Breast epithelium (tissue), 4 donors: ENCODE measurements at regions of chr1 and their contacts with region 1.

Region 1: GRCh38 chr1:30407865-30408580 is 315.4 kb downstream of the MATN1 start:
- DNase-seq: peak in 1 of 2 donors; percentile 33
- H3K4me3 ChIP-seq: no peak overlapping the region
- H3K27ac ChIP-seq: no peak overlapping the region
- H3K4me1 ChIP-seq: no peaks in the 10 kb centered on the region
- H3K27me3 ChIP-seq: no peaks in the 10 kb centered on the region
- CTCF ChIP-seq: no peak
- POLR2A ChIP-seq: no peak

Region 2: GRCh38 chr1:29395736-29396437 is 1012.1 kb before region 1 on chr1:
- intact Hi-C with region 1: loop called (anchors 2 kb)
- DNase-seq: no peak
- H3K4me3 ChIP-seq: no peak overlapping the region
- H3K27ac ChIP-seq: no peak overlapping the region
- H3K4me1 ChIP-seq: no peaks in the 10 kb centered on the region
- H3K27me3 ChIP-seq: peaks cover 0 to 4% of the 10 kb centered on the region in 2 donors
- CTCF ChIP-seq: no peak
- POLR2A ChIP-seq: no peak